A549 (cell line): ENCODE measurements at regions of chr1 and their contacts with region 1.

Region 1: DNA sequence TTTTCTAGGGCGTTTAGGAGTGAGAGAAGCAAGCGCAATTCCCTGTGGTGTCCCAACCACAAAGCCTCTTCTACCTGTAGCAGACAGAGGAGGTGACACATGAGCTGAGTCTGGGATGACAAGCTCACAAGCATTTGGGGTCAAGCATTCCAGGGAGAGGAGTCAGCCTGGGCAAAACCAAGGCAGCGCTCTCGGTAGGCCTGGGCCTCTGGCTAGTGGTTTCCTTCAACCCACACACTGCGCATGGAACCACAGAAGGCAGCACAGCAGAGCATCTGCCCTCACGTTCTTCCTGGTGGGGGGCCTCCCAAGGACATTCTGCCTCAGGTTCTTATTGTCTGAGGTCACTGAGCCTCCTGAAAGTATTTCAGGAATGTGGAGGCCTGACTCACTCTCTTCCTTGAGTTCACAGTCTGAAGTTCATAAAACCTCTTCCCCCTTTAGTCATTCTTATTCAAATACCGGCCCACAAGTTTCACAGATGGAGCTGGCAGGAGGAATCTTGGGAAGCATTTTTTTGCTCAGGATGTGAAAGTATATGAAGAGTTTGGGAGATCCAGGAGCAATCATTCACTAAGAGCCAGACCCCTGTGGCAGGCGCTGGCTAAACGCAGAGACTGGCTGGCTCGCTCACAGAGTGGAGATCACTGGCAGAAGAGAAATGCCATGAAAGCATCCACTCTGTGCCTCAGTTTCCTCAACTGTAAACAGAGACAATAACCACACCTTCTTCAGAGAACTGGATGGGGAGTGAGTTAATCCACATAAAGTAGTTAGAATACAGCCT is 26.8 kb downstream of the CCN1 start:
- DNase-seq: peak; percentile 82 to 92
- ATAC-seq: peak; percentile 89 to 90
- H3K4me3 ChIP-seq: no peak overlapping the region
- H3K27ac ChIP-seq: peak overlapping the region; percentile 91 to 92
- H3K4me1 ChIP-seq: peaks cover 73% of the 10 kb centered on the region
- CTCF ChIP-seq: no peak
- EP300 ChIP-seq: peak; percentile 79 to 93; a peak in 4 of 5 replicates
- POLR2A ChIP-seq: no peak
- RAD21 ChIP-seq: peak; percentile 17 to 44; a peak in 3 of 5 replicates

Region 2: GRCh38 chr1:85584264-85584781 is 23.0 kb before region 1 on chr1:
- CTCF ChIA-PET with region 1: interaction called, 8 read pairs
- POLR2A ChIA-PET with region 1: interaction called, 26 read pairs
- DNase-seq: peak in 1 of 2 experiments; percentile 69
- ATAC-seq: peak; percentile 2 to 5; a peak in 3 of 6 replicates
- H3K4me3 ChIP-seq: peak overlapping the region; percentile 83; the same call in 2 of the 3 replicates
- H3K27ac ChIP-seq: peak overlapping the region; percentile 99 to 100
- H3K4me1 ChIP-seq: peaks cover 44% of the 10 kb centered on the region
- CTCF ChIP-seq: no peak
- EP300 ChIP-seq: peak in 1 of 2 experiments; percentile 32; a peak in 1 of 5 replicates
- POLR2A ChIP-seq: no peak
- RAD21 ChIP-seq: 0 out of 5 replicates have a peak, but pooled peaks of 1 of the 2 experiments have one; percentile 11